SK-N-SH (cell line): ENCODE measurements at regions of chr19 and their contacts with region 1.

Region 1: GRCh38 chr19:19531951-19532805 is 3.5 kb downstream of the YJEFN3 start:
- DNase-seq: peak; percentile 86
- H3K4me3 ChIP-seq: no peak overlapping the region; a peak in 1 of 4 replicates
- H3K27ac ChIP-seq: no peak overlapping the region
- H3K4me1 ChIP-seq: peaks cover 0 to 14% of the 10 kb centered on the region in 2 experiments; a peak in 1 of 4 replicates
- H3K27me3 ChIP-seq: no peaks in the 10 kb centered on the region
- CTCF ChIP-seq: peak; percentile 95
- EP300 ChIP-seq: no peak
- RAD21 ChIP-seq: peak; percentile 89

Region 2: DNA sequence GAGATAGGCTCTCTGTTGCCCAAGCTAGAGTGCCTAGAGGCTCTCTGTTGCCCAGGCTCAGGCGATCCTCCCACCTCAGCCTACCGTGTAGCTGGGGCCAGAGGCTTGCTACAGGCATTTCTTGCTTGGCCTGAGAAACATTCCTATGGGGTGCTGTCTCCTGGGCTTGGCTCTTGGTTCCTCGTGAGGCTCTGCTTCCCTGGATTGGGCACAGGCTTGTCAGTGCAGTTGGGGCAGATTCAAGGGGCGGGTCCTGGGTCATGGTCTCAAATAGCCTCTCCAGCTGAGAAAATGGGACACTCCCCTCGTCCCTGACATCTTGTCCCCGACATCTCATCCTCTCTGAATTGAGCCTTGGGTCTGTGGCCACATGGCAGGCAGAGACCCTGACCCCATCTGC is 21.7 kb before region 1 on chr19:
- CTCF ChIA-PET with region 1: interaction called, 38 read pairs
- POLR2A ChIA-PET with region 1: interaction called, 15 read pairs
- DNase-seq: no peak
- H3K4me3 ChIP-seq: no peak overlapping the region
- H3K27ac ChIP-seq: no peak overlapping the region
- H3K4me1 ChIP-seq: peaks cover 0 to 5% of the 10 kb centered on the region in 2 experiments; a peak in 1 of 4 replicates
- H3K27me3 ChIP-seq: no peaks in the 10 kb centered on the region
- CTCF ChIP-seq: no peak
- EP300 ChIP-seq: no peak
- RAD21 ChIP-seq: no peak

Region 3: GRCh38 chr19:19520989-19521388 is 11.2 kb before region 1 on chr19:
- CTCF ChIA-PET with region 1: interaction called, 38 read pairs
- POLR2A ChIA-PET with region 1: interaction called, 15 read pairs
- DNase-seq: no peak
- H3K4me3 ChIP-seq: no peak overlapping the region
- H3K27ac ChIP-seq: no peak overlapping the region
- H3K4me1 ChIP-seq: peaks cover 0 to 3% of the 10 kb centered on the region in 2 experiments; a peak in 1 of 4 replicates
- H3K27me3 ChIP-seq: no peaks in the 10 kb centered on the region
- CTCF ChIP-seq: no peak
- EP300 ChIP-seq: no peak
- RAD21 ChIP-seq: no peak

Region 4: DNA sequence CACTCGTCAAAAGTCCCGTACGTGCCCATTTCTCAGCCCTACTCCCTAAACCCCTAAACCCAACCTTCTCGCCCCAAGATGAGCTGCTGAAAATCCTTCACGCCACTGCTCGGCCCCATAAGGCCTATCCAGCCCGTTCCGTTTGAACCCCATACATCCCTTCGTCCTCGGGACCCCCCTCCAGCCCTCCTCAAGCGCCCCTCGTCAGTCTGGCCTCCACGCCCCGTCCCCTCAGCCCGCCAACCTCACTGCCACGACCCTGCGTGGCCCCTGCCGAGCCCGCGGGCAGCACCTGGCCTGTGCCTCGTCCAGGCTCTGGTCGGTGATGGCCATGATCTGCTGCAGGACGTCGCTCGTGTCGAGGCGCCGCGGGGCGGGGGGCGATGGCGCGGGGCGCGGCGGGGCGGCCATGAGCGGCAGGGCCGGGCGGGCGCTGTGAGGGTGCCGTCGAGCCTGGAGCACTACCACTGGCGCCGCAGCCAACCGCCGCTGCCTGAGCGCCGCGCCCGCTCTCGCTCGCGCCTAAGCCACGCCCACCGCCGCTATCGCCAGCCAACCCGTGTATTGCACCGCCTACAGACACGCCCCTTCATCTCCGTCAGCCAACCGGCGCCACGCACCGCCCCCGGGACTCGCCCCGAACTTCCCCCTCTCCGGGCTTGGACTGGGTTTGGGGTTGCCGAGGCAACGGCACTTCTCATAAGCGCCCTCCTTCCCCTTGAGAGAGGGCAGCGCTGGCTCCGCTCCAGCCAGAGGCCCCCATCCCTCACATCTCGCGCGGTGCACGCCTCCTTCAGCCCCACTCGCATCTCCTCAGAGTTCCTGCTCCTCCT is 86.3 kb after region 1 on chr19 and contains the start of gene PBX4:
- CTCF ChIA-PET with region 1: interaction called, 11 read pairs
- POLR2A ChIA-PET with region 1: no interaction called
- DNase-seq: peak; percentile 99
- H3K4me3 ChIP-seq: peak within 1 kb of the TSS; percentile 51 to 74
- H3K27ac ChIP-seq: peak within 1 kb of the TSS in 1 of 2 experiments; percentile 51; a peak in 2 of 4 replicates
- H3K4me1 ChIP-seq: peaks cover 4% of the 10 kb centered on the region in 2 experiments; a peak in 2 of 4 replicates
- H3K27me3 ChIP-seq: no peaks in the 10 kb centered on the region
- CTCF ChIP-seq: no peak
- EP300 ChIP-seq: no peak
- RAD21 ChIP-seq: no peak
- polyA plus RNA-seq, gene PBX4: 5.1 and 6.4 TPM in 2 replicates

Region 5: GRCh38 chr19:19634516-19635312 is 102.5 kb after region 1 on chr19:
- CTCF ChIA-PET with region 1: interaction called, 175 read pairs
- POLR2A ChIA-PET with region 1: no interaction called
- DNase-seq: no peak
- H3K4me3 ChIP-seq: no peak overlapping the region
- H3K27ac ChIP-seq: no peak overlapping the region
- H3K4me1 ChIP-seq: no peaks in the 10 kb centered on the region
- H3K27me3 ChIP-seq: no peaks in the 10 kb centered on the region
- CTCF ChIP-seq: no peak
- EP300 ChIP-seq: no peak
- RAD21 ChIP-seq: no peak

Region 6: GRCh38 chr19:19657397-19657783 is 125.2 kb after region 1 on chr19:
- CTCF ChIA-PET with region 1: interaction called, 49 read pairs
- POLR2A ChIA-PET with region 1: interaction called, 3 read pairs
- DNase-seq: peak; percentile 54
- H3K4me3 ChIP-seq: no peak overlapping the region
- H3K27ac ChIP-seq: no peak overlapping the region; a peak in 1 of 4 replicates
- H3K4me1 ChIP-seq: peaks cover 0 to 14% of the 10 kb centered on the region in 2 experiments; a peak in 2 of 4 replicates
- H3K27me3 ChIP-seq: no peaks in the 10 kb centered on the region
- CTCF ChIP-seq: no peak
- EP300 ChIP-seq: no peak
- RAD21 ChIP-seq: no peak

Region 7: DNA sequence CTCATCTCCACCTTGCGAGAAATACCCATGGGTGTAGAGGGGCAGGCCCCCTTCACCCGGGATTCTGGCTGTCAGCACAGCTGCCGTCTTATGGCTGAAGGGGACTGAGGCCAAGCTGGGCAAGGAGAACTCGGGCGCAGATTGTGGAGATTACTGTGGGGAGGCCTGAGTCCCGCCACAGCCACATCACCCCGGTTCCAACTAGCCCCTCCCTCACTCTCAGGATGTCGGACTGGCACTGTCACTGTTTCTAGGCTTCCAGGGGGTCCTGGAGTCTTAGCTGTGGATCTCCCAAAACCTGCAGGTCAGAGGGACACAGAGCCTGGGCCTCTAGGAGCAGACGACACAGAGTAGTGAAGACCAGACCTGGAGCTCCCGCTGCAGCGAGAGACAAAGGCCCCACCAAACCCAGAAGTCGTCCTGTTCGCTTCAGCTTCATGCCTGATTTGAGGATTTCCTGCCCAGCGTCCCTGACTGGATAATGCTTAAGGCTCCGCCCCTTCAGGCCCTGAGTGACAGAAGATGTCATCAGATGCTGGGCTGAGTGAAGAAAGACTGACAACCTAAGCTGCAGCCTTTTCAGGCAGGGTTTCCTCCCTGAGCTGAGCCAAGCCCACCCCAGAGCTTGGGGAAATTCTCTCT is 424.4 kb after region 1 on chr19:
- CTCF ChIA-PET with region 1: interaction called, 10 read pairs
- POLR2A ChIA-PET with region 1: no interaction called
- DNase-seq: no peak
- H3K4me3 ChIP-seq: no peak overlapping the region
- H3K27ac ChIP-seq: no peak overlapping the region
- H3K4me1 ChIP-seq: peaks cover 0 to 2% of the 10 kb centered on the region in 2 experiments; a peak in 1 of 4 replicates
- H3K27me3 ChIP-seq: no peaks in the 10 kb centered on the region; the same call in 1 of the 2 replicates
- CTCF ChIP-seq: no peak
- EP300 ChIP-seq: no peak
- RAD21 ChIP-seq: no peak